ENCODE measurements at regions of chr1 and their contacts with region 1.

Region 1: GRCh38 chr1:20867847-20868246 is 80.7 kb upstream of the HP1BP3 start:
- ATAC-seq: peak in 2 of 8 experiments; percentile 21 to 23
- H3K4me3 ChIP-seq: no peak overlapping the region
- H3K27ac ChIP-seq: no peak overlapping the region
- H3K4me1 ChIP-seq: no peaks in the 10 kb centered on the region

Region 2: GRCh38 chr1:20753589-20753988 is 114.3 kb before region 1 on chr1:
- in situ Hi-C with region 1: loop called in 1 of 9 experiments (anchors 25 kb)
- ATAC-seq: peak in 1 of 8 experiments; percentile 47
- H3K4me3 ChIP-seq: no peak overlapping the region
- H3K27ac ChIP-seq: no peak overlapping the region
- H3K4me1 ChIP-seq: peaks cover 0 to 4% of the 10 kb centered on the region in 2 donors

Measured in motor neuron (in vitro differentiated cells).